Activated T-helper 1 cell treated with anti-CD3 and anti-CD28 coated beads, Interleukin-12 subunit alpha, Interleukin-12 subunit beta, Interleukin-2, Interleukin-4 antibody, amounts not matched to agents 30 ng/mL and 10 ng/mL and 1 ng/mL, durations not matched to agents 14 hours and 24 hours and 36 hours (primary cell): ENCODE measurements at regions of chr19 and their contacts with region 1.

Region 1: GRCh38 chr19:4246767-4247593 is at the start of gene YJU2:
- DNase-seq: peak; percentile 99
- H3K4me3 Mint-ChIP-seq: peak within 1 kb of the TSS; percentile 96
- H3K27ac Mint-ChIP-seq: peak within 1 kb of the TSS; percentile 100
- H3K4me1 Mint-ChIP-seq: peaks cover 11% of the 10 kb centered on the region
- H3K27me3 Mint-ChIP-seq: no peaks in the 10 kb centered on the region
- total RNA-seq, gene YJU2: 36.8 and 40.6 TPM in 2 replicates

Region 2: GRCh38 chr19:4065430-4066175 is 181.4 kb before region 1 on chr19:
- intact Hi-C with region 1: loop called (anchors 1 kb)
- DNase-seq: peak; percentile 97
- H3K4me3 Mint-ChIP-seq: peak overlapping the region; percentile 64
- H3K27ac Mint-ChIP-seq: no peak overlapping the region
- H3K4me1 Mint-ChIP-seq: peaks cover 16% of the 10 kb centered on the region
- H3K27me3 Mint-ChIP-seq: no peaks in the 10 kb centered on the region

Region 3: DNA sequence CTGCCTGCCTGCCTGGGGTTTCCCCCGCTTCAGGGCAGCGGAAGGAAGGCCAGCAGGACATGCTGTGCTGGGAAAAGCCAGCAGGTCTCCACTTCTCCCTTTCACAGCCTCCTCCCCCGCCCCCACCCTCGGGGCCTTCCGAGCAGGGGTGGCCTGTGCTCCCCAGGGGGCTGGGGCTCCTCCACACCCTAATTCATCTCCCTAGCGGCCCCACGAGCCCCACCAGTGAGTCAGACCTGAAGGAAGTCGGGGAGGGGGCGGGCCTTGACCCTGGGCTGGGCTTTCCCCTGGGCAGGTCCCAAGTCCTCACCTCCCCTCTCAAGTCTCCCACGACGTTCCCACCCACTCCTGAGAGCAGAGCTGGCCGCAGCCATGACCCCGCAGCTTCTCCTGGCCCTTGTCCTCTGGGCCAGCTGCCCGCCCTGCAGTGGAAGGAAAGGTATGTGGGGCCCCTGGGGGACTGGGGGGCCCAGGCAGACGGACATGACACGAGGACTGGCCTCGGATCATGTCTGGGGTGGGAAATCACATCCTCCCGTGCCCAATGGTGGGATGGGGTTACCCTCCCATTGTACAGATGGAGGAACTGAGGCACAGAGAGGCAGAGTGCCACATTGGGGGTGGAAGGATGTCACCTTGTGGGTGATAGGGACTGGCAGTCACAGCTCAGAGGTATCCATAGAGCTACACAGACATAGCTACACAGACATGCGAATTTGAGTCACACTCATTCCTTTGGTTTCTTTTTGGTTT is 17.6 kb before region 1 on chr19 and contains the start of gene EBI3:
- intact Hi-C with region 1: loop called (anchors 1 kb)
- DNase-seq: peak; percentile 60
- H3K4me3 Mint-ChIP-seq: no peak within 1 kb of the TSS
- H3K27ac Mint-ChIP-seq: no peak within 1 kb of the TSS
- H3K4me1 Mint-ChIP-seq: peaks cover 11% of the 10 kb centered on the region
- H3K27me3 Mint-ChIP-seq: no peaks in the 10 kb centered on the region
- total RNA-seq, gene EBI3: 43.3 and 49.7 TPM in 2 replicates

Region 4: DNA sequence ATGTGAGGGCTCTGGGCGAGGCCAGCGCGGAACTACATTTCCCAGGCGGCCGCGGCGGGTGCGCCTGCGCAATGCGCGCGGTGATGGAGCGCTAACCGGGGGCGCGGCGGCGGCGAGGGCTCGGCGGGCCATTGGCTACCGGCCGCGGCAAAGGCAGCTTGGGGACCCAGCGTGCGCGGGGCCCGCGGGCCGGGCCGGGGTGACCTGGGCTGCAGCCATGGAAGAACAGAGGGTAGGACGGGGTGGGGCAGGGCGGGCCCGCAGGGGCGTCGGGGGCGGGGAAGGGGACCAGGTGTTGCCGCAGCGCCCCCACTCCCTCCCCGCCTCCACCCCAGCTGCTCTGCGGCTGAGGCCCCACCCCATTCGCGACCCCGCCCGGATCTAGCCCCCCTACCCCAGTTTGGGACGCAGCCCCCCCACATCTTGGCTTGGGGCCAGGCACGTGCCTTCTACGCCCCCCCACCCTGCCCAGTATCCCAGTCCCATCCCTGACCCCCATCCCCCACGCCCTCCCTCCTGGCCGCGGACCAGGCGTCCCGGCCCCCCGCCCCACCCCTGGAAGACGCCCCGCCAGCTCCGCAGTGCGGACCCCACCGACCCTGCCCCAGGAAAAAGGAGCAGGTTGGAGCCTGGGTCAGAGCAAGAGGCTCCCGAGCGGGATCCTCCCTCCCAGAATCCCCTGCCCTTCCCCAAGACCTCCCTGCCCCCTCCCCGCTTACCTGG is 57.7 kb after region 1 on chr19 and contains the start of gene FSD1:
- intact Hi-C with region 1: loop called (anchors 2 kb)
- DNase-seq: peak; percentile 76
- H3K4me3 Mint-ChIP-seq: peak within 1 kb of the TSS; percentile 81
- H3K27ac Mint-ChIP-seq: peak within 1 kb of the TSS; percentile 70
- H3K4me1 Mint-ChIP-seq: peaks cover 31% of the 10 kb centered on the region
- H3K27me3 Mint-ChIP-seq: no peaks in the 10 kb centered on the region
- total RNA-seq, gene FSD1: 39.1 and 46.5 TPM in 2 replicates

Region 5: GRCh38 chr19:4342615-4343369 is 95.8 kb after region 1 on chr19:
- intact Hi-C with region 1: loop called (anchors 1 kb)
- DNase-seq: peak; percentile 92
- H3K4me3 Mint-ChIP-seq: peak overlapping the region; percentile 91
- H3K27ac Mint-ChIP-seq: peak overlapping the region; percentile 90
- H3K4me1 Mint-ChIP-seq: peaks cover 18% of the 10 kb centered on the region
- H3K27me3 Mint-ChIP-seq: no peaks in the 10 kb centered on the region